Activated naive CD4-positive, alpha-beta T cell treated with anti-CD3 and anti-CD28 coated beads for 36 hours (primary cell): ENCODE measurements at regions of chr19 and their contacts with region 1.

Region 1: GRCh38 chr19:39125554-39126311 is at the start of gene PAK4:
- DNase-seq: peak; percentile 99
- H3K4me3 Mint-ChIP-seq: peak within 1 kb of the TSS; percentile 92
- H3K27ac Mint-ChIP-seq: peak within 1 kb of the TSS; percentile 92
- H3K4me1 Mint-ChIP-seq: peaks cover 38% of the 10 kb centered on the region
- H3K27me3 Mint-ChIP-seq: peaks cover 2% of the 10 kb centered on the region
- total RNA-seq, gene PAK4: 16.9 to 18.1 TPM

Region 2: DNA sequence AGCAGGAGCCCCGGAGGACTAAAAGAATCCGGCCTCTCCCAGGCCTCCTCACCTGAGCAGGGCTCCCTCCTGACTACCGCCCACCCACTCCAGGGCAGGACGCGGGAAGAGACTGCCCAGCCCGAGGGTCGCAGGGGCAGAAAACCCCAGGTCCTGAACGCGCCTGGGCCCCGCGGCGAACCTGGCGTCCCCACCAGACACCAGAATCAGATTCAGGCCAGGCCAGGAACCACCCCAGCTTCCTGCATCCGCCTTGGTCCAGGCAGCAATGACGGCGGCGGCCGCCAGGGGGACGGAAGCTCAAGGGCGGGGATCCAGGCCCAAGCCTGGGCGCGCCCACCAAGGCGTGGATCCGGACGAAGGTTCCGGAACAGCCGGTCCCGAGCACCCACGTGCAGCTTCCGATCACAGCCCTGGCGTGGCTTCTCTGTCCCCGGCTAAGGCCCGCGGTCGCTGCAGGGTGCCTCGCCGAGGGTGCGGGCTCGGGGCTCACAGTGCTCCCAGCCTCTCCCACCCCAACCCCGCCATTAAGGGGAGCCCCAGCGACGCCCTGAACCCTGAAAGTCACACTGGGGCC is 356.0 kb before region 1 on chr19:
- CTCF ChIA-PET with region 1: no interaction called
- intact Hi-C with region 1: no loop called
- DNase-seq: peak; percentile 91
- H3K4me3 Mint-ChIP-seq: peak overlapping the region; percentile 47
- H3K27ac Mint-ChIP-seq: no peak overlapping the region
- H3K4me1 Mint-ChIP-seq: peaks cover 6% of the 10 kb centered on the region
- H3K27me3 Mint-ChIP-seq: no peaks in the 10 kb centered on the region

Region 3: DNA sequence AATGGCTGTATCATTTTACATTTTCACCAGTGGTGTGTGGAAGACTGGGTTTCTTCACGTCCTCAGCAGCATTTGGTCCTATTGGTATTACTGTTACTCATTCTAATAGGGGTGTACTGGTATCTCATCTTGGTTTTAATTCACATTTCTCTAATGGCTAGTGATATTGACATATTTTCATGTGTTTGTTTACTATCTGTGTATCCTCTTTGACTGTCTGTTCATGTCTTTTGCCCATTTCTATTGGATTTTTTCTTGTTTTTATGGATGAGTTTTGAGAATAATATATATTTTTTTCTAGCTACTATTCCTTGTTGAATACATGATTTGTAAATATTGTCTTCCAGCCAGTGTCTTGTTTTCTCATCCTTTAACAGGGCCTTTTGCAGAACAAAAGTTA is 156.3 kb after region 1 on chr19:
- CTCF ChIA-PET with region 1: no interaction called
- intact Hi-C with region 1: no loop called
- DNase-seq: no peak
- H3K4me3 Mint-ChIP-seq: no peak overlapping the region
- H3K27ac Mint-ChIP-seq: no peak overlapping the region
- H3K4me1 Mint-ChIP-seq: no peaks in the 10 kb centered on the region
- H3K27me3 Mint-ChIP-seq: peaks cover 12% of the 10 kb centered on the region

Region 4: DNA sequence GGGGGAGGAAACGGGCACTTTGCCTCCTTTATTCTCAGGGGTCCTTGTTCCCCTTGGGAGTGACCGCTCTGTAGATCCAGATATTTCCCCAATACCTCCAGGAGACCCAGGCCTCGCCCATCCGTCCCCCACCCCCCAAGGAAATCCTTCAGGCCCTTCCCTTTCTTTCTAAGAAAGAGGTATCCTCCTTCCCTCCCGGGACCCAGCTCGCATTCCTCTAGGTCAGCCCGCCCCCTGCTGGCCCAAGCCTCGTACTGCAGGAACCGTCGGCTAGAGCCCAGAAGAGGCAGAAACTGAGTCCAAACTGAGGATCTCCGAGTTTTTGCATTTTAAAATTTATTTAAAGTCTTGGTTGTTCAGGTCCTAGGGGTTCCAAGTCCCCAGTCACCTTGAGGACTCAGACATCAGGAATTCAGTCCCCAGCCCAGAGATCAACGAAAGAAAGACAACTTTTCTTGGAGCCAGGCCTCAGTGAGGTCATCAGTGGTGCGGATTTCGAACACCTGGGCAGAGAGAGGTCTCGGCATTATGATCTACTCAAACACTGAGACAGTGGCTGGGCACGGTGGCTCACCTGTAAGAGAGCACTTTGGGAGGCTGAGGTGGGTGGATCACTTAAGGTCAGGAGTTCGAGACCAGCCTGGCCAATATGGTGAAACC is 202.4 kb after region 1 on chr19:
- CTCF ChIA-PET with region 1: interaction called, 9 read pairs
- intact Hi-C with region 1: loop called (anchors 1 kb)
- DNase-seq: peak; percentile 89
- H3K4me3 Mint-ChIP-seq: no peak overlapping the region
- H3K27ac Mint-ChIP-seq: peak overlapping the region; percentile 50
- H3K4me1 Mint-ChIP-seq: peaks cover 42% of the 10 kb centered on the region
- H3K27me3 Mint-ChIP-seq: no peaks in the 10 kb centered on the region